ENCODE measurements at regions of chr5 and their contacts with region 1.

Region 1: DNA sequence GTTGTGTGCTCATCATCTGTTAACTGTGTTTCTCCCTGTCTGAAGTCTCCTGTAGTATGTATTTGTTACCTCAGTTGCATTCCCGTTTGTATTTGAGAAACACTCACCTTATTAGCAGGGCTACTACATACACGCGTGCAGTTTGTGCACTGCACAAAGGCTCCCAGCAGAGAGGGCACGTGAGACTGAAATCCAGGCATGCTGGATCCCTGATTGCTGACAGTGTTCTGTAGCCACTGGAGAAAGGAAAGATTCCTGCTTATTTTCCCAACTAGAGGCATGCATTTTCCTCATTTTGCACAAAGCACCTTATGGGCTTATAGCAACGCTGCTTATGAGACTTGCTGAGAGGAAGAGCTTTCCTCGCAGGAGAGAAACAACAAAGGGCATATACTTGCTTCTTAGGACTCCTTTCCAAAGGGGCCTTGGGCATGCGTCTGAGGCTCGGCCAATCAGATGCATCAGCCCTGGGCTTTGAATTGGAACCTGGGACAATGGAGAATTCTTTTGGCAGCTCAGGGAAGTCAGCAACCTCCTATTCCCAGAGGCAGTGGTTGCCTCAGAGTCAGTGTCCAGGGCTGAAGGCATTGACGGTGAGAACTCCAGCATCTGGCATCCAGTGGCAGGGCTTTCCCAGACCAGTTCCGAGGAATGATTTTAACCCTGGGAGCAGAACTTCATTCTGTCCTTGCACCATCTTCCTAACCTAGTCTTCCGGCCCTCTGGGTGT is 9.9 kb upstream of the MEGF10 start:
- DNase-seq: no peak
- ATAC-seq: no peak
- H3K4me3 ChIP-seq: no peak overlapping the region
- H3K4me3 Mint-ChIP-seq: no peak overlapping the region
- H3K27ac ChIP-seq: no peak overlapping the region
- H3K27ac Mint-ChIP-seq: no peak overlapping the region
- H3K4me1 ChIP-seq: no peaks in the 10 kb centered on the region
- H3K4me1 Mint-ChIP-seq: peaks cover 0 to 2% (median 0%) of the 10 kb centered on the region in 7 donors
- H3K27me3 ChIP-seq: peaks cover 3 to 6% of the 10 kb centered on the region in 2 donors
- H3K27me3 Mint-ChIP-seq: peaks cover 10 to 32% (median 22%) of the 10 kb centered on the region in 5 donors

Region 2: DNA sequence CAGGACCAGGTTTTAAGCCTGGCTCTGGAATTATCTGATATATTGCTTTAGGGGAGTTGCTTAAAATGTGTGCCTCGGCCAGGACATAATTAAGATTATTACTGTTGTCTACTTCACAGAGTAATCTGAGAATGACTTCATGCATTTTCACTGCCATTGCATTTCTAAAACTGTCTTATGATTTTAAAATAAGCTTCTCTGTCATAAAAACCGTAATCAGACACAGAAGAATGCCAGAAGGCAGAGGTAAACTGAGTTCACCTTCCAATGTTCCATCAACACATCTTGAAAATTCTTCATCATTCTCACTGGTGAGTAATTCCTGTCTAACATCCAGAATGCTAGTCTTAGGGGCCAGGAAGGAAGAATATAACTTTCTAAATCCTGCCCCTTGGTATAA is 1861.0 kb after region 1 on chr5:
- CTCF ChIA-PET with region 1: no interaction called
- POLR2A ChIA-PET with region 1: no interaction called
- intact Hi-C with region 1: loop called in 1 of 2 experiments (anchors 10 kb)
- DNase-seq: no peak
- ATAC-seq: no peak
- H3K4me3 ChIP-seq: no peak overlapping the region
- H3K4me3 Mint-ChIP-seq: no peak overlapping the region
- H3K27ac ChIP-seq: no peak overlapping the region
- H3K27ac Mint-ChIP-seq: no peak overlapping the region
- H3K4me1 ChIP-seq: no peaks in the 10 kb centered on the region
- H3K4me1 Mint-ChIP-seq: no peaks in the 10 kb centered on the region
- H3K27me3 ChIP-seq: no peaks in the 10 kb centered on the region
- H3K27me3 Mint-ChIP-seq: peaks cover 0 to 2% (median 0%) of the 10 kb centered on the region in 5 donors

Measured in naive thymus-derived CD4-positive, alpha-beta T cell (primary cell).